Body of pancreas (tissue), 4 donors: ENCODE measurements at regions of chr6 and their contacts with region 1.

Region 1: DNA sequence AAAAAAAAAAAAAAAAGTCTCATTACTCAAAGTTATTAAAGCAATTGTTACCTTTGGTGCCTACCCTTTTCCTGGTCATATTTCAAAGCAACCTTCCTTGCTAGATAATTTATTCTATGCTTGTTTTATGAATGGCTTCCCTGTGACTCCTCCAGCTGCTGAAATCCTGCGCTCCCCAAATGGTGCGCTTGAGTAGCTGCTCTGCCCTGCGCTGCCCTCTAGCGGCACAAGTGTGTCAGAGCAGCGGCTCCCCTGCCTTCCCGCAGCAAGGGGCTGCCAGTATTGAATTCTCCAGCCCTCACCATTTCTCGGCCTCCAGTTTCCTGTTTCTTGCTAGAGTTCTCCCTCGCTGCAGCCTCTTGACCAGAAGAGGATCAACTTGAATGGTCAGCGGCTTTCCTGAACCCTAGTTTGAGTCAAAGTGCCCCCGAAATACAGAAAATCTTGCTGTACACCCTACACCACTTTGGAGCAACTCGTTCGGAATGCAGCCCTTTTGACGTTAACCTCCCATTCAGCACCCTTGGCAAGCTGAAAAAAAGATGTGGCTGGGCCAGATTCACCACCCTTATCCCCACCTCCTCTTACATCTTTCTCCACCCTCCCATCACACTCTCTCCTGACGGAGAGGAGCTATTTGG is 60.4 kb upstream of the KLHL31 start:
- DNase-seq: peak; percentile 81 to 86 (median 82)
- ATAC-seq: peak; percentile 87
- H3K4me3 ChIP-seq: no peak overlapping the region
- H3K27ac ChIP-seq: no peak overlapping the region
- H3K4me1 ChIP-seq: peaks cover 11% of the 10 kb centered on the region
- H3K27me3 ChIP-seq: no peaks in the 10 kb centered on the region
- CTCF ChIP-seq: peak; percentile 87 to 97 (median 92)
- POLR2A ChIP-seq: no peak

Region 2: DNA sequence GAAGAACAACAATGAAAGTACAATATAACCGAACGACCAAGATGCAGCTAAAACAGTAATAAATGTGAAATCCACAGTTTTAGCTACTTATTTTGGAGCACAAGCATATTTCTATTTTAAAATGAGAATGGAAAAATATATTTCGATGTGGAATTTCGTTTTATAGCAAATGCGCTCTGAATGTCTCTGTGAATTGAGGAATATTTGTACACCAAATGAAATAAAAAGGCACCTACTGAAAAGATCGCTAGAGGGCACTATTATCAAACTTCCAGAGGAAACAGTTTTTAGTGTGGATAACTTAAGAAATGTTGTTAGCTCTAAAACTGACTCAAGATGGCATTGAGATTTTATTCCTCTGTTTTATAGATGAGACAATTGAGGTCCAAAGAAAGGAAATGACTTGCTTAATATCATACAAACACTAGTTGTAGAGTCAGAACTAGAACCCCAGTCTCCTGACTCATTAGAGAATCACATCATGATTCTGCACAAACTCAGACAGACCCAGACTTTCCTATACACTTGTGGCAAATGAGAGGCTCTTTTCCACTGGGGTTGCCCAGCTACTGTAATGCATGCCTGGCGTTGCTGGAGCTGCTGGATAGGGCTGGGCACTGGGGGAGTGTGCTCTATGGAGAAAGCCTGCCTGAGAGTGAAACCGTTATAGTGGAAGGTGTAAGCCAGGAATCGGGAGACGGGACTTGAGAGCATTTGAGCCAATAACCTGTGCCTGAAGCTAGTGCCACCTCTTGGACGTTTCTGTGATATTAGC is 232.9 kb before region 1 on chr6:
- intact Hi-C with region 1: loop called (anchors 10 kb)
- DNase-seq: peak in 2 of 4 donors; percentile 27 to 33
- ATAC-seq: peak; percentile 77
- H3K4me3 ChIP-seq: no peak overlapping the region
- H3K27ac ChIP-seq: no peak overlapping the region
- H3K4me1 ChIP-seq: peaks cover 21% of the 10 kb centered on the region
- H3K27me3 ChIP-seq: no peaks in the 10 kb centered on the region
- CTCF ChIP-seq: peak; percentile 47 to 85 (median 77)
- POLR2A ChIP-seq: no peak